GM13976 (cell line): ENCODE measurements at regions of chr9 and their contacts with region 1.

Region 1: GRCh38 chr9:1042466-1042865 is 7.7 kb upstream of the DMRT2 start:
- DNase-seq: peak; percentile 45
- CTCF ChIP-seq: peak; percentile 20

Region 2: GRCh38 chr9:922171-922570 is 120.3 kb before region 1 on chr9:
- in situ Hi-C with region 1: no loop called
- DNase-seq: no peak
- CTCF ChIP-seq: no peak

Region 3: GRCh38 chr9:976258-976942 is 66.1 kb before region 1 on chr9 and contains the start of gene DMRT3:
- in situ Hi-C with region 1: loop called (anchors 10 kb)
- DNase-seq: peak; percentile 39
- CTCF ChIP-seq: no peak

Region 4: DNA sequence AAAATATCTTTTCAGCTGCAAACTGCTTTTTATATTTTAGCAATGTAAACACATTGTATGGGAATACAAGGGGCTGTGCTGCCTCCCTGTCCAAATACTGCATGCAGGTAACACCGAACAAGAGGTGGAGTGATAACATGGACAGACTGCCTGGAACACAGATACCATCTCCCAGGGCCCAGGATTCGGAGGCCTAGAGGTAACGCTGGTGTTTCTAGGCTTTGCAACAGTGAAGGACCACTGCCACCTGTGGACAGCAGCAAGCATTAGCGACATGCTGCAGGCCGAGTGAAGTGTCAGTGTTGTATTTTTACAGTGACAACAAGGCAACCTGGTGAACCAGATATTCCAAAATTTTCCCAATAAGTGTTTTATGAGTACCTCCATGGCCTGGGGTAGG is 386.8 kb after region 1 on chr9:
- in situ Hi-C with region 1: loop called (anchors 25 kb)
- DNase-seq: no peak
- CTCF ChIP-seq: peak; percentile 6